ENCODE measurements at regions of chr1 and their contacts with region 1.

Region 1: DNA sequence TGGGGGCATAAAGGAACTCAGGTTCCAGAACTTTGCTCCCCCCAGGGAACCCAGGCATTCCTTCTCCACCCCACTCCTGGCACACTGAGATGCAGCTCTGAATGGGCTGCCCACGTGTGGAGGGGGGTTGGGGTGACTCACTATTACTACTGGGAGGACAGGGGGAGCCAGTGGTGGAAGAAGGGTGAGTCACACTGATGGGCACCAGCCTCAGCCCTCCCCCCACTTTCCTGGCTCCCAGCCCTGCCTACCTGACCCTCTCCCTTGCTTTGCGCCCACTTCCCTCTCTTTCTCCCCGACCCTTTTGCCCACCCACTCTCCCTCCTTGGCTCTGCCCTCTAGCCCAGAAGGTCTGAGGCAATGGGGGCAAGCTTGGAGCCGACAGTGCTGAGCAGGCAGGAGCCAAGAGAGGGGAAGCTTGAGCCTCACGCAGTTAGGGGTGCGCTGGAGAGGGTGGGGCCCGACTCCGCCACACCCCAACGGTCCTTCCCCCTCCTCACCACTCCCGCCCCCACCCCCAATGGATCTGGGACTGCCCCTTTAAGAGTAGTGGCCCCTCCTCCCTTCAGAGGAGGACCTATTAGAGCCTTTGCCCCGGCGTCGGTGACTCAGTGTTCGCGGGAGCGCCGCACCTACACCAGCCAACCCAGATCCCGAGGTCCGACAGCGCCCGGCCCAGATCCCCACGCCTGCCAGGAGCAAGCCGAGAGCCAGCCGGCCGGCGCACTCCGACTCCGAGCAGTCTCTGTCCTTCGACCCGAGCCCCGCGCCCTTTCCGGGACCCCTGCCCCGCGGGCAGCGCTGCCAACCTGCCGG is at the start of gene LMNA:
- DNase-seq: peak in 13 of 14 experiments; percentile 51 to 93 (median 68)
- ATAC-seq: peak; percentile 77
- H3K4me3 ChIP-seq: peak within 1 kb of the TSS; percentile 84
- H3K4me3 Mint-ChIP-seq: peak within 1 kb of the TSS; percentile 99
- H3K27ac ChIP-seq: peak within 1 kb of the TSS; percentile 50 to 64
- H3K27ac Mint-ChIP-seq: peak within 1 kb of the TSS; percentile 89
- H3K4me1 ChIP-seq: peaks cover 55% of the 10 kb centered on the region
- H3K4me1 Mint-ChIP-seq: peaks cover 31% of the 10 kb centered on the region
- H3K27me3 ChIP-seq: peaks cover 24 to 28% of the 10 kb centered on the region in 2 experiments
- H3K27me3 Mint-ChIP-seq: peaks cover 46% of the 10 kb centered on the region
- CTCF ChIP-seq: no peak
- total RNA-seq, gene LMNA: 435 to 455 TPM

Region 2: DNA sequence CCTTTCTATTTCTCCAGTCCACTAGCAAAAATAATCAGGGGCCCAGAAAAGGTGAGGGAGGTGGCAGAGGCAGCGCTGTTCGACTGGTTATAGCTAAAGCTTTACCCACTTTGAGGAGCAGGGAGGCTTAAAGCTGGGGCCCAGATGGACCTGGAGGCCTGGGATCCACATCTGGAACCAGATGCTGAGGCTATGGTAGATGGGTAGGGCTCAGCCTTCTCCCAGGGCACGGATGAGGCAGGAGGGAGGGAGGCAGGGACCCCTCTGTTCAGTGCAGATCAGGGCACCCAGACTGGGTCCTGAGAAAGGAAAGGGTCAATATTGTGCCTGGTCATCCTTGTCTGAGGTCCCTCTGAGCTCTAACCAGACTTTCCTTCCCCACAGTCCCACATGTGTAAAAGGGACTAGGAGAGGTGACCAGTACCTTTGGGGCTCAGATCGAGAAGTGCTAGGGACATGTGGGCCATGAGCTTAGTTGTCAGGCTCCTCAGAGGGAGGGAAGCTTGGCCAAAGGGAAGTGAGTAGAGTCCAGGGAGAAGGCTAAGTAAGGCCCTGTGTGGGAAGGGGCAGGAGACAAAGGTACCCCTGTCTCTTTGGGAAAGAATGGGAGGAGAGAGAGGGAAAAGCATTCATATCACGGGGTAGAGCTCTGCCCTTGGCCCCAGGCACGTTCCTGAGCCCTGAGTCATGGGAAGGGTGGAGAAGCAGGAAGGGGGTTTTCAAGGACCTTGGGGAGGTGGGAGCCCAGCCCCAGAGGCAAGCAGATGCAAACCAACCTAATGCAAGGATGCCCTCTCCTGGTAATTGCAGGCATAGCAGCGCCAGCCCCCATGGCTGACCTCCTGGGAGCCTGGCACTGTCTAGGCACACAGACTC is 15.6 kb after region 1 on chr1:
- CTCF ChIA-PET with region 1: interaction called, 13 read pairs
- POLR2A ChIA-PET with region 1: interaction called, 17 read pairs
- intact Hi-C with region 1: no loop called
- DNase-seq: peak; percentile 60 to 87 (median 72)
- ATAC-seq: no peak
- H3K4me3 ChIP-seq: no peak overlapping the region
- H3K4me3 Mint-ChIP-seq: peak overlapping the region; percentile 60
- H3K27ac ChIP-seq: no peak overlapping the region
- H3K27ac Mint-ChIP-seq: peak overlapping the region; percentile 78
- H3K4me1 ChIP-seq: peaks cover 58% of the 10 kb centered on the region
- H3K4me1 Mint-ChIP-seq: peaks cover 50% of the 10 kb centered on the region
- H3K27me3 ChIP-seq: no peaks in the 10 kb centered on the region
- H3K27me3 Mint-ChIP-seq: no peaks in the 10 kb centered on the region
- CTCF ChIP-seq: peak; percentile 92

Region 3: DNA sequence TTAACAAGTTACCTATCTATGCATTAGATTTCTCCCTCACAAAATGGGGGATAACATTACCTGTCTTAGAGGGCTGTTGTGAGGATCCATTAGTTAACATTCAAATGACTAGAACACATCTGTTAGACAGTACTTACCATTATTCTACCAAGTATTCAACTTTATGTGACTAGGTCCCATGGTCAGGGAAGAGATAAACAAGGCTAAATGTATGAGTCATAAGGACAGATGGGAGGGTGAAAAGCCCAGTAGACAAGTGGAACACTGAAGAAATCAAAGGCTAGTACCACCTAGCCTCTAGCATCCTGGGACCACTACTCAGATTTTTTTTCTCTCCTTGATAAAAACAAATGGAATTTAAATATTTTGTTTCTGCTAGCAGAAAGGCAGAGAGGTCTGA is 193.8 kb after region 1 on chr1:
- CTCF ChIA-PET with region 1: no interaction called
- POLR2A ChIA-PET with region 1: no interaction called
- intact Hi-C with region 1: no loop called
- DNase-seq: no peak
- ATAC-seq: no peak
- H3K4me3 ChIP-seq: no peak overlapping the region
- H3K4me3 Mint-ChIP-seq: no peak overlapping the region
- H3K27ac ChIP-seq: no peak overlapping the region
- H3K27ac Mint-ChIP-seq: no peak overlapping the region
- H3K4me1 ChIP-seq: no peaks in the 10 kb centered on the region
- H3K4me1 Mint-ChIP-seq: no peaks in the 10 kb centered on the region
- H3K27me3 ChIP-seq: no peaks in the 10 kb centered on the region
- H3K27me3 Mint-ChIP-seq: no peaks in the 10 kb centered on the region
- CTCF ChIP-seq: no peak

Measured in CD4-positive, alpha-beta T cell (primary cell).